GM12878 (cell line): ENCODE measurements at regions of chr6 and their contacts with region 1.

Region 1: DNA sequence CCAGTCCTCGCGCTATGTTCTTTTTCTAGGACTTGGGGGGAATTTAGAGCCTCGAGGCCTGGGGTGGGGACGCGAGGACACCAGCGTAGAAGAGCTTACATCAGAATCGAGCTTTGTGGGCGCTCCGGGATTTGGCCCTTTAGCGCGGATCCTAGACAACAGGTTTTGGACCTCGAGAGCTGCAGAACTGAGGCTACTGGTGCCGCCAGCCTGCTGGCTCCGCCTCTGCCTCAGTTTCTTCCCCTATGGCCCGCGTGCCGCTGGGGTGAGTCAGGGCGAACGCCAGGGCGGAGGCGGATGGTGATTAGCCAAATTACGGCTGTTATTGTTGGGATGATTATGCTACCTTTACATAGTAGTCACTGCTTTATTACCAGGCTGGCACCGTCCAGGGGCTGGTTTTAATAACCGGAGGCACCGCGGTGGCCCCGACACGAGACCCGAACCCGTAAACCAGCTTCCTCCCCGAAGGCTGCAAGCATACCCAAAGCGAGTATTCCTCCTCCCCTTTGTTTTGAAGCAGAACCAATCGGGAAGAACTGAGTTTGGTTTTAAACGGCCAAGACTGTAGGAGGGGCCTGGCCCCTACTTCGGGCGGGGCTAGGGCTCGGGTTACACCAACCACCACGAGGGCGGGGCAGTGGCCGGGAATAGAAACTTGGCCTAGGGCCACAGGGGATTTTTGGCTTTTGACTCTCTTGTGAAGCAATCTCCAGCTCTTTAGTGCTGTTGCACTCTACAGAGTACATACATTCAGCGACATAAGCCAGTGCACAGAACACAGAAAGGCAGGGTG is 639 bp upstream of the GTPBP2 start:
- DNase-seq: peak; percentile 96
- ATAC-seq: peak; percentile 86
- H3K4me3 ChIP-seq: peak overlapping the region; percentile 80
- H3K27ac ChIP-seq: peak overlapping the region; percentile 99
- H3K4me1 ChIP-seq: peaks cover 20% of the 10 kb centered on the region
- H3K27me3 ChIP-seq: no peaks in the 10 kb centered on the region
- CTCF ChIP-seq: no peak
- EP300 ChIP-seq: 0 out of 4 replicates have a peak, but pooled peaks have one; percentile 42 to 48
- POLR2A ChIP-seq: peak; percentile 83
- RAD21 ChIP-seq: no peak

Region 2: GRCh38 chr6:43575772-43576551 is 53.7 kb before region 1 on chr6 and contains the starts of genes POLH and XPO5:
- CTCF ChIA-PET with region 1: no interaction called
- POLR2A ChIA-PET with region 1: interaction called, 16 read pairs
- RAD21 ChIA-PET with region 1: interaction called, 7 read pairs
- SMC1A ChIA-PET with region 1: interaction called, 7 read pairs
- in situ Hi-C with region 1: no loop called
- intact Hi-C with region 1: no loop called
- DNase-seq: peak; percentile 82
- ATAC-seq: peak; percentile 95
- H3K4me3 ChIP-seq: peak within 1 kb of the TSS; percentile 89
- H3K27ac ChIP-seq: peak within 1 kb of the TSS; percentile 79
- H3K4me1 ChIP-seq: no peaks in the 10 kb centered on the region; the same call in 1 of the 2 replicates
- H3K27me3 ChIP-seq: no peaks in the 10 kb centered on the region
- CTCF ChIP-seq: peak in 1 of 3 experiments; percentile 29; a peak in 2 of 6 replicates
- EP300 ChIP-seq: no peak
- POLR2A ChIP-seq: peak; percentile 99
- RAD21 ChIP-seq: no peak
- polyA plus RNA-seq, gene POLH: 5.5 to 6.3 TPM
- polyA plus RNA-seq, gene XPO5: 11.3 to 21.7 TPM

Region 3: GRCh38 chr6:43687437-43688347 is 58.0 kb after region 1 on chr6 and contains the start of gene MRPS18A:
- CTCF ChIA-PET with region 1: no interaction called
- POLR2A ChIA-PET with region 1: interaction called, 16 read pairs
- RAD21 ChIA-PET with region 1: interaction called, 3 read pairs
- SMC1A ChIA-PET with region 1: no interaction called
- in situ Hi-C with region 1: no loop called
- intact Hi-C with region 1: no loop called
- DNase-seq: no peak
- ATAC-seq: peak; percentile 98
- H3K4me3 ChIP-seq: peak within 1 kb of the TSS; percentile 98
- H3K27ac ChIP-seq: peak within 1 kb of the TSS; percentile 86
- H3K4me1 ChIP-seq: peaks cover 18% of the 10 kb centered on the region
- H3K27me3 ChIP-seq: no peaks in the 10 kb centered on the region
- CTCF ChIP-seq: no peak
- EP300 ChIP-seq: no peak
- POLR2A ChIP-seq: peak; percentile 89
- RAD21 ChIP-seq: no peak
- polyA plus RNA-seq, gene MRPS18A: 105 to 158 TPM

Region 4: DNA sequence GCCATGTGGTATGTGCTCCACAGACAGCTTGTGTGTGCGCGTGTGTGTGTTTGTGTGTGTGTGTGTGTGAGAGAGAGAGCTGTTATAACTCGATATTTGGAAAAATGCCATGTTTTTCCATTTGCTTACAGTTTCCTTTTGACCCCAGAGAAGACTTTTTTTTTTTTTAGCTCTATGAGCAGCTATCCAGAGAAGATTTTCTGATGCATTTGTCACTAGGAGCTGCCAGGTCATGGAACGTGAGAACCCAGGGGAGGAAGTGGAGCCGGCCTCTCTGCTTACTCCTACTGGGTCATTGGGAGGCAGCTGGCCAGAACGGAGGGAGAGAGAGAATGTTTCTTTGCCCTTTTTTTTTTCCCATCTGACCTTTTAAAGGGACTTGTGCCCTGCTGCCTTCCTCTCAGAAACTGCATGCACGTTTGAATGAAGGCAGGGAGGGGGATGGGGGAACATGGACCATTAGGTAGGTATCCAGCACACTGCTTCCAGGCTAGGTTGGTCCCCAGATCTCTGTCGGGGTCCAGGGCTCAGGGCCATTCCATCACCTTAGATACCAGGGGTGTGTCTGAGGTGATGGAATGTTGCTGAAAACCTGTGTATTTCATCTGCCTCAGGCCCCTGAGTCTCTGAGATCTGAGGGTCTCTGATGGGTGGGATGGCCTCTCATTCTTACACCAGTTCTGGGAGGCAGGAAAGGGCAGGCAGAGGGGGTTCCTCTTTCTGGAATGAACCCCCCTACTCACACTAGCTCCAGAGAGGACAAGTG is 69.1 kb after region 1 on chr6:
- CTCF ChIA-PET with region 1: no interaction called
- POLR2A ChIA-PET with region 1: no interaction called
- RAD21 ChIA-PET with region 1: no interaction called
- SMC1A ChIA-PET with region 1: no interaction called
- in situ Hi-C with region 1: no loop called
- intact Hi-C with region 1: no loop called
- DNase-seq: no peak
- ATAC-seq: no peak
- H3K4me3 ChIP-seq: no peak overlapping the region
- H3K27ac ChIP-seq: no peak overlapping the region
- H3K4me1 ChIP-seq: peaks cover 3% of the 10 kb centered on the region
- H3K27me3 ChIP-seq: no peaks in the 10 kb centered on the region
- CTCF ChIP-seq: no peak
- EP300 ChIP-seq: no peak
- POLR2A ChIP-seq: no peak
- RAD21 ChIP-seq: no peak